ENCODE measurements at regions of chrX and their contacts with region 1.

Region 1: DNA sequence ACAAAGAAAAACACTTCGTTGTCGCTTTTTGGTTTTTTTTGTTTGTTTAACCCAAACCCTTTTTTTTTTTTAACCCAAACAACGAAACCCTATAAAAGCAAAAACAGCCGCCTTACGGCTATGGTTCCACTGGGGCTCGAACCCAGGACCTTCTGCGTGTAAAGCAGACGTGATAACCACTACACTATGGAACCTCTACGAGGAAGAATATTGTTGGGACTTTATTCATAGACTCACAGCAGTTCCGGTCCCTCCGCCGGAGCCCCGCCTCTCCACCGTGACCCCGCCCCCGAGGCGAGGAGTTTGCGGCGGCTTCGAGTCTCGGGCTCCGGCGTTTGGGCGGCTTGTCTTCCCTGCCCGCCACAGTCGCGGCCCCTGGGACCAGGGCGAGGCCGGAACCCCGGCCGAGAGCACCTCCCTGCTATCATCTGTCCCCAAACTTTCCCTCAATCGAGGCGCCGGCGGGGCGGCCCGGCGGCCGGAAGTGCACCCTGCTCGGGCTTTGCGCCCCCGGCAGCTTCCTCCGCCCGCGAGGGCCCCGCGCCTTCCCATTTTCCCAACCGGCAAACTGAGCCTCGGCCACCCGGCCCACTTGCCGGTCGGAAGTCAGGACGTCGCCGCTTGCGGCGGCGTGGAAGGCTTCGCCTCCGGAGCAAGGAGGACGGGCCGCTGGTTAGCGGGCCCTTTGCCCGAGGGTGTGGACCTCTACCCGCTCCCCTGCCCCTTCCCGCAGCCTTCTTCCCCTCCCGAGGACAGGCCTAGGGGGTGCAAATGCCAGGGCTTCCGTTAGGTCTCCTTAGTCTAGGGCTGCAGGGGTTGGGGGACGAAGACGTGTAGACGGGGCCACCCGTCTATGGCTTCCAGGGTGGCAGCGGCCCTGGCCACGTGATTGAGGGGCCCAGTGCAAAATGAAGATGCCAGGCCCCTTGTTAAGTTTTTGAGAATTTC is 3.2 kb upstream of the RS1 start:
- DNase-seq: peak; percentile 86
- ATAC-seq: peak; percentile 97

Region 2: GRCh38 chrX:17987783-17988182 is 687.3 kb before region 1 on chrX:
- intact Hi-C with region 1: no loop called
- DNase-seq: no peak
- ATAC-seq: no peak

Region 3: DNA sequence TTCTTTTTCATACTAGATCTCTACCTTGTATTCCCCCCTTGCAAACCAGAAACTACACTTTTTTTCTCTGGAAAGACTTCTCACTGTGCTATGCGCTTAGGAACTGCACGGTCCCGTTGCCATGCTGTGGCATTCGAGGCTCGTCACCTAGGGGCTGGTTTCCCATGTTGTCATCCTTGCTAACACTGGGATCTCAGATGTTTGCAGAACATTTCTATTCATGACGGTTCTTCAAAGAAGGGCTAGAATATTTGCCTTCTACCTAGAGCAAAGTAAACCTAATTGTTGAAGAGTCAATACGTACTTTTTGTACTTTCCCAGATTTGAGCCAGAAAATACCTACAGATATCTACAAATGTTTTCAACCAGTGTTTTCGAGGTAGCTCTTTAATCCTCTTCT is 44.1 kb before region 1 on chrX:
- intact Hi-C with region 1: loop called (anchors 1 kb)
- DNase-seq: no peak
- ATAC-seq: no peak